ENCODE measurements at regions of chr9 and their contacts with region 1.

Region 1: DNA sequence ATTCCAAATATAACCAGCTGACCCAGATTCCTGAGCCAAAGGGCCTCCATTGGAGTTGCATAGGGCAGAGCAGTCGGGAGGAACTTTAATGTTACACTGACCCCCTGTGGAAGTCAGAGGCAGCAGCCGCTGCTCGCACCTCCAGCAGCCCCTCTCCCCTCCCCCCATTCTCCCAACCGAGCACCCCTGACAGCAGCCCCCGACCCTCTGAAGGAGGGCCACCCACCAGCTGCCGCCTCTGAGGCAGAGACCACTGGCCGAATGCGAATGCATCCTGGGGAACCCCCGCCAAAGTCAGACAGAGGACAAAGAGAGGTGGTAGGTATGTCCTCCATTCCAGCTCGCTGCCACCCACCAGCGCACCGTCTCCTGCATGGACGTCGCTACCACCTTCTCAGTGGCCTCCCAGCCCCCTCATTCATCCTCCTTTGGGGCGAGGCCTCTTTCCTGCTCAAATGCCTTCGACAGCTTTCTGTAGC is 231.0 kb downstream of the CDK5RAP2 start:
- DNase-seq: peak; percentile 51 to 65
- H3K4me3 ChIP-seq: no peak overlapping the region
- H3K4me3 Mint-ChIP-seq: no peak overlapping the region
- H3K27ac Mint-ChIP-seq: no peak overlapping the region
- H3K4me1 ChIP-seq: 0 out of 2 replicates have a peak, but pooled peaks cover 3% of the 10 kb centered on the region
- H3K4me1 Mint-ChIP-seq: no peaks in the 10 kb centered on the region
- H3K27me3 ChIP-seq: no peaks in the 10 kb centered on the region
- H3K27me3 Mint-ChIP-seq: peaks cover 2% of the 10 kb centered on the region
- CTCF ChIP-seq: peak; percentile 73 to 83

Region 2: DNA sequence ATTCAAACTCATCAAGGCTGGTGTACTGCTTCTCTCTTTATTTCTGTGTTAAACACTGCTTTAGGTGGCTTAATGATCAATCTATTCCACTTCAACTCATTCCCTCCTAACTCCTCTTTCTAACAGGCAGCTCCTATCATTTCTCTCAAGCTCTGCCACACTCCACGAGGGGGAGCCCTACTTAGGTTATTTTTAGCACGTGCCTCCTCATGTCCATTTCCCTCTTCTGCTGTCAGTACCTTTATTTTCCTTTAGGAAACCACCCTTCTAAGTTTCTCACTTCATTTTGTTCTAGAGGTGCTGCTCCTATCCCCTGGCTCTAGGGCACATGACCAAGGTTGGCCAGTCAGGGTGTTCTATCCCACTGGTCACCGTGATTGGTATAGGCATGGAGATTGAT is 973.1 kb before region 1 on chr9:
- CTCF ChIA-PET with region 1: interaction called, 4 read pairs
- POLR2A ChIA-PET with region 1: no interaction called
- intact Hi-C with region 1: loop called (anchors 1 kb)
- DNase-seq: peak; percentile 44 to 55
- H3K4me3 ChIP-seq: no peak overlapping the region
- H3K4me3 Mint-ChIP-seq: no peak overlapping the region
- H3K27ac Mint-ChIP-seq: no peak overlapping the region
- H3K4me1 ChIP-seq: no peaks in the 10 kb centered on the region
- H3K4me1 Mint-ChIP-seq: no peaks in the 10 kb centered on the region
- H3K27me3 ChIP-seq: no peaks in the 10 kb centered on the region
- H3K27me3 Mint-ChIP-seq: peaks cover 5% of the 10 kb centered on the region
- CTCF ChIP-seq: peak; percentile 33 to 42

Region 3: DNA sequence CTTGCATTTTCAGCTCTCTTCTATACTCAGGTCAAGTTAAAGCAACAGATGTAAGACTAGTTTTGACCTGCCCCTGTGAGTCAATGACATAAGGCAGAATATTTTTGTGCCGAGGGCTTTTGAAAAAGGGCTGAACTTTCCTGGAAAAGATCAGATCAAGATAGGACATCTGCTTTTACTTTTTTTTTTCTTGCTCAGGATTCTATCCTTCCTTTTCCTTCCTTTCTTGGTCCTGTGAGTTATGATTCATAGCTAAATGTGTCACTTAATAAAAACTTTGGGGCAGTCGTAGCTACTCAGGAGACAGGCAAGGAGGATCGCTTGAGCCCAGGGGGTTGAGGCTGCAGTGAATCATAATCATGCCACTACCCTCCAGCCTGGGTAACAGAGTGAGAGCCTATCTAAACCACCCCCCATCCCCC is 895.5 kb before region 1 on chr9:
- CTCF ChIA-PET with region 1: no interaction called
- POLR2A ChIA-PET with region 1: no interaction called
- intact Hi-C with region 1: loop called (anchors 2 kb)
- DNase-seq: no peak
- H3K4me3 ChIP-seq: no peak overlapping the region
- H3K4me3 Mint-ChIP-seq: no peak overlapping the region
- H3K27ac Mint-ChIP-seq: no peak overlapping the region
- H3K4me1 ChIP-seq: no peaks in the 10 kb centered on the region
- H3K4me1 Mint-ChIP-seq: no peaks in the 10 kb centered on the region
- H3K27me3 ChIP-seq: no peaks in the 10 kb centered on the region
- H3K27me3 Mint-ChIP-seq: peaks cover 4% of the 10 kb centered on the region
- CTCF ChIP-seq: no peak

Measured in Caco-2 (cell line).